ENCODE measurements at regions of chr1 and their contacts with region 1.

Region 1: GRCh38 chr1:88180449-88181108 is 503.5 kb upstream of the PKN2 start:
- DNase-seq: peak; percentile 58
- H3K4me3 ChIP-seq: no peak overlapping the region
- H3K27ac ChIP-seq: no peak overlapping the region
- H3K4me1 ChIP-seq: no peaks in the 10 kb centered on the region
- H3K27me3 ChIP-seq: peaks cover 6% of the 10 kb centered on the region
- CTCF ChIP-seq: peak; percentile 98 to 99

Region 2: GRCh38 chr1:88228152-88228551 is 47.6 kb after region 1 on chr1:
- CTCF ChIA-PET with region 1: no interaction called
- dilution Hi-C with region 1: no loop called
- in situ Hi-C with region 1: no loop called
- intact Hi-C with region 1: no loop called
- DNase-seq: no peak
- H3K4me3 ChIP-seq: no peak overlapping the region
- H3K27ac ChIP-seq: no peak overlapping the region
- H3K4me1 ChIP-seq: no peaks in the 10 kb centered on the region
- H3K27me3 ChIP-seq: no peaks in the 10 kb centered on the region
- CTCF ChIP-seq: peak in 1 of 2 donors; percentile 9

Region 3: GRCh38 chr1:88302843-88303486 is 122.4 kb after region 1 on chr1:
- CTCF ChIA-PET with region 1: interaction called, 5 read pairs
- dilution Hi-C with region 1: no loop called
- in situ Hi-C with region 1: no loop called
- intact Hi-C with region 1: loop called (anchors 1 kb)
- DNase-seq: no peak
- H3K4me3 ChIP-seq: no peak overlapping the region
- H3K27ac ChIP-seq: no peak overlapping the region
- H3K4me1 ChIP-seq: no peaks in the 10 kb centered on the region
- H3K27me3 ChIP-seq: no peaks in the 10 kb centered on the region
- CTCF ChIP-seq: peak in 1 of 2 donors; percentile 54

Region 4: DNA sequence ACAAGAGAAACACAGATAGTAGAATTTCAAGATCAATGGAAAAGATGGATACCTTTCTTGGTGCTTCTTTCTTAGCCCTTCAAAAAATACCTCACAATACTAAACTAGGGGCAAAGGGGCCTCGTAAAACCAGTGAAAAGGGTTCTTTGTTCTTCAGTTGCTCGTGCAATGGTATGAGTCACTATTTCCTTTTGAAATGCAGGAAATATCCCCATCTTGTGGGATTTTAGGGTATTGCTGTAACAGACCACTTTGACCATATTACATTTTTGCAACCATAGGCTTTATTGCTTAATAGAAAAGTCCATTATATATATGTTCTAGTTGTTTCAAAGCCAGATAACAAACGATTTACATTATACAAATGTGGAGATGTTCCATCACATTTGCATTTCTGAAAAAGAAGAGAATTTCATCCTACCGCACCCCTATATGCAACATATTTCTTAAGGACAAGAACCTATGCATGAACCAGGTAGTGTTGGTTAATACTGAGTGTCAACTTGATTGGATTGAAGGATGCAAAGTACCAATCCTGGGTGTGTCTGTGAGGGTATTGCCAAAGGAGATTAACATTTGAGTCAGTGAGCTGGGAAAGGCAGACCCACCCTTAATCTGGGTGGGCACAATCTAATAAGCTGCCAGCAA is 414.9 kb after region 1 on chr1:
- CTCF ChIA-PET with region 1: no interaction called
- dilution Hi-C with region 1: no loop called
- in situ Hi-C with region 1: no loop called
- intact Hi-C with region 1: loop called (anchors 2 kb)
- DNase-seq: peak; percentile 62
- H3K4me3 ChIP-seq: no peak overlapping the region
- H3K27ac ChIP-seq: no peak overlapping the region
- H3K4me1 ChIP-seq: no peaks in the 10 kb centered on the region
- H3K27me3 ChIP-seq: no peaks in the 10 kb centered on the region
- CTCF ChIP-seq: peak; percentile 51 to 69

Measured in mammary epithelial cell (primary cell).